ENCODE measurements at regions of chr12 and their contacts with region 1.

Region 1: DNA sequence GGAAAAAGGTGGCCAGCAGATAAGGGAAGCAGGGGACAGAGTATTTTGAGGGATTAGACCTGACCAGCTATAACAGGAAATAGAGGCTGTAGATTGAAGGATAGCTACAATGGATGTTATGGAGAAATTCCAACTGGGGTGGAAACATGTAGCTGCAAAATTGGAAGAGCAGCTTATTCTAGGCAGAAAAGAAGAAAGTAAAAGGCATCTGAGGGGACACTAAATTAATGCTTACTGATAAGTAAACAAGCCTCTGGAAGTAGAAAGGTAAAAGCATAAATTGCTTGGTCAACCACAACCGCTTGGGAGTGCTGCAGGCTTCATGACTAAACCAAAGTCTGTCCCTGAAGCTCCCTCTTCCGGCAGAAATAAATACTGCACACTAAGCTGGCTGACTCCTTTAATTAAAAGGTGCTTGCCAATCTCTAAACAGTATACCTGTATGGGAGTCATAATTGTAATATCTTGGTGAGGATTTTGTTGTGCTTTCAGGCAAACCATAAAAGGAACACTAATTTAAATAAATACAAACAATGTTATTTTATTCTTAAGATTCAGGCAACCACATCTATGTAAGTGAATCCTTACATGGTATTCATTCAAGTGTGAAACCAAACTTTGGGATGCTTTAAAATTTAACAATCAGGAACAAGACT is 7.7 kb downstream of the UBC start:
- DNase-seq: peak; percentile 93
- ATAC-seq: peak; percentile 93
- H3K4me3 ChIP-seq: no peak overlapping the region
- H3K4me3 Mint-ChIP-seq: no peak overlapping the region
- H3K27ac ChIP-seq: no peak overlapping the region
- H3K27ac Mint-ChIP-seq: peak overlapping the region; percentile 54
- H3K4me1 ChIP-seq: peaks cover 22 to 33% of the 10 kb centered on the region in 2 donors
- H3K4me1 Mint-ChIP-seq: peaks cover 39% of the 10 kb centered on the region
- H3K27me3 ChIP-seq: no peaks in the 10 kb centered on the region
- H3K27me3 Mint-ChIP-seq: no peaks in the 10 kb centered on the region
- CTCF ChIP-seq: peak; percentile 100

Region 2: GRCh38 chr12:124767066-124767821 is 139.5 kb before region 1 on chr12:
- CTCF ChIA-PET with region 1: interaction called, 6 read pairs
- POLR2A ChIA-PET with region 1: no interaction called
- intact Hi-C with region 1: loop called (anchors 5 kb)
- DNase-seq: peak; percentile 80
- ATAC-seq: peak; percentile 90
- H3K4me3 ChIP-seq: no peak overlapping the region
- H3K4me3 Mint-ChIP-seq: no peak overlapping the region
- H3K27ac ChIP-seq: no peak overlapping the region
- H3K27ac Mint-ChIP-seq: peak overlapping the region; percentile 1
- H3K4me1 ChIP-seq: peaks cover 11 to 14% of the 10 kb centered on the region in 2 donors
- H3K4me1 Mint-ChIP-seq: peaks cover 10% of the 10 kb centered on the region
- H3K27me3 ChIP-seq: peaks cover 0 to 9% (median 4%) of the 10 kb centered on the region in 4 experiments
- H3K27me3 Mint-ChIP-seq: peaks cover 12% of the 10 kb centered on the region
- CTCF ChIP-seq: peak; percentile 98

Region 3: GRCh38 chr12:124884587-124885438 is 21.9 kb before region 1 on chr12:
- CTCF ChIA-PET with region 1: interaction called, 28 read pairs
- POLR2A ChIA-PET with region 1: no interaction called
- intact Hi-C with region 1: no loop called
- DNase-seq: peak; percentile 88
- ATAC-seq: peak; percentile 96
- H3K4me3 ChIP-seq: peak overlapping the region in 4 of 5 experiments; percentile 11 to 38 (median 28)
- H3K4me3 Mint-ChIP-seq: peak overlapping the region; percentile 83
- H3K27ac ChIP-seq: peak overlapping the region; percentile 59 to 67
- H3K27ac Mint-ChIP-seq: peak overlapping the region; percentile 95
- H3K4me1 ChIP-seq: peaks cover 55 to 70% of the 10 kb centered on the region in 2 donors
- H3K4me1 Mint-ChIP-seq: peaks cover 64% of the 10 kb centered on the region
- H3K27me3 ChIP-seq: peaks cover 0 to 3% (median 0%) of the 10 kb centered on the region in 4 experiments
- H3K27me3 Mint-ChIP-seq: no peaks in the 10 kb centered on the region
- CTCF ChIP-seq: no peak

Region 4: DNA sequence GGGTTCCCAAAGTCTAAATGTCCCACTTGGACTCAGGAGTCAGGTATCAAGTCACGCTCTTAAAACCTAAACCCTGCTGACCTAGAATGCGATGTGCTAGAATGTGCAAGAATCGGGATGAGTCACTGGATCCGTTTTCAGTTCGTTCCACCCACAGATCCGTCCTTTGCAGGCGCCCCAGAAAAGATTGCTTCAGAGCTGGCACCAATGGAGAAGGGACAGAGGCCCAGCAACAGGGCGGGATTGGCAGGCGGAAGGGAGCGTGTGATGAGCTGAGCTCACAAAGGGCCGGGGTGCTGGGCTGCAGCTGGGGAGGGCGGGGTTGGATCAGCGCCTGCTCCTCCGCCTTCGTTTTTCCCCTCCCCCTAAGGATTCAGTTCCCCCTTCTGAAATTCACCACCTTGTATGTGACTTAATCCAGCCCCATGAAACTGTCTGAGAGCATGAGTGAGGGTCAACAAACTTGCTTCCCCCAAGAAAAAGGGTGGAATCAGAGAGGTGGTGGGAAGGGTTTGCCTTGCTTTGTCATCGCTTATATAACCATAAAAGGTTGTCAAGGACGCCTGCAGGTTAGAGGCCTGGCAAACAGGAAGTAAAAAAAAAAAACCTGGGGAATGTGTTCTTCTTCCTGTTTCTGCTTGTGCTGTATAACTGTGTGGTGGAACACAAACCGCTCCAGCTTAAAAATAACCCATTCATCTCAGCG is 10.6 kb after region 1 on chr12:
- CTCF ChIA-PET with region 1: interaction called, 101 read pairs
- POLR2A ChIA-PET with region 1: interaction called, 7 read pairs
- intact Hi-C with region 1: loop called (anchors 2 kb)
- DNase-seq: peak; percentile 97
- ATAC-seq: peak; percentile 59
- H3K4me3 ChIP-seq: peak overlapping the region; percentile 36 to 73 (median 51)
- H3K4me3 Mint-ChIP-seq: peak overlapping the region; percentile 88
- H3K27ac ChIP-seq: peak overlapping the region; percentile 93 to 95
- H3K27ac Mint-ChIP-seq: peak overlapping the region; percentile 97
- H3K4me1 ChIP-seq: peaks cover 74 to 80% of the 10 kb centered on the region in 2 donors
- H3K4me1 Mint-ChIP-seq: peaks cover 88% of the 10 kb centered on the region
- H3K27me3 ChIP-seq: no peaks in the 10 kb centered on the region
- H3K27me3 Mint-ChIP-seq: no peaks in the 10 kb centered on the region
- CTCF ChIP-seq: no peak

Region 5: GRCh38 chr12:124927201-124928094 is 20.7 kb after region 1 on chr12:
- CTCF ChIA-PET with region 1: interaction called, 101 read pairs
- POLR2A ChIA-PET with region 1: interaction called, 4 read pairs
- intact Hi-C with region 1: no loop called
- DNase-seq: peak; percentile 94
- ATAC-seq: peak; percentile 88
- H3K4me3 ChIP-seq: peak overlapping the region; percentile 69 to 91 (median 77)
- H3K4me3 Mint-ChIP-seq: peak overlapping the region; percentile 93
- H3K27ac ChIP-seq: peak overlapping the region; percentile 43 to 50
- H3K27ac Mint-ChIP-seq: peak overlapping the region; percentile 99
- H3K4me1 ChIP-seq: peaks cover 16 to 24% of the 10 kb centered on the region in 2 donors
- H3K4me1 Mint-ChIP-seq: peaks cover 29% of the 10 kb centered on the region
- H3K27me3 ChIP-seq: no peaks in the 10 kb centered on the region
- H3K27me3 Mint-ChIP-seq: no peaks in the 10 kb centered on the region
- CTCF ChIP-seq: no peak

Region 6: DNA sequence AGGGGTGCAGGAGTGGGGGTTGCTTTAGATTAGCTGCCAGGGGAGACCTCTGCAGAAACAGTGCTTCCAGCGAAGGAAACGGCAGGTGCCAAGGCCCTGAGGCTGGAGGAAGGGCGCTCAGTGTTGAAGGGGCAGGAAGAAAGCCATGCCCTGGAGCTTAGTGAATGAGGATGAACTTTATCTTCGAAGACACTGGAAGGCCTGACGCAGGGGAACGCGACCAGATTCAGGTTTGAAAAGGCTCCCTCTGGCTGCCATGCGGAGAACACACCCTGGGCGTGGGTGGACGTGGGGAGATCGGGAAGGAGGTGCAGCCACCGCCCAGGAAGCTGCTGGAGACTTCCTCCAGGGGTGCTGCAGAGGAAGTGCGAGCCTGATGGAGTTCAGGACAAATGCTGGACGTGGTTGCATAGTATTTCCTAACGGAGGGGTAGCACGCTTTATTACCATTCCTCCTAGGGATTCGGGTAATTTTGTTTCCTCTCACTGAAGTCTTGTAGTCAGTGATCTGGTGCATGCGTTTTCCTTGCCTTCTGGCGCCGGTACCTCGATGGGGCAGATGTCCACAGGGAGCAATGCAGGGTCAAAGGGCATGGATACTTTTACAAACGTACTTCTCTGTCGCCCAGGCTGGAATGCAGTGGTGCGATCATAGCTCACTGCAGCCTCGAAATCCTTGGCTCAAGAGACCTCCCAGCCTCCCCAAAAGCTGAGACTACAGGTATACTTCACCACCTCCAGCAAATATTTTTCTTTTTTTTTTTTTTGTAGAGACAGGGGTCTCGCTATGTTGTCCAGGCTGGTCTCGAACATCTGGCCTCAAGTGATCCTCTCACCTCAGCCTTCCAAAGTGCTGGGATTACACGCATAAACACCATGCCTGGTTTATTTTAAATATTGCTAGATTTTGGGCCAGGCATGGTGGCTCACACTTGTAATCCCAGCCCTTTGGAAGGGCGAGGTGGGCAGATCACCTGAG is 34.1 kb after region 1 on chr12:
- CTCF ChIA-PET with region 1: interaction called, 384 read pairs
- POLR2A ChIA-PET with region 1: interaction called, 29 read pairs
- intact Hi-C with region 1: loop called (anchors 1 kb)
- DNase-seq: peak; percentile 88
- ATAC-seq: peak; percentile 57
- H3K4me3 ChIP-seq: peak overlapping the region in 4 of 5 experiments; percentile 58 to 80 (median 75)
- H3K4me3 Mint-ChIP-seq: no peak overlapping the region
- H3K27ac ChIP-seq: peak overlapping the region; percentile 44 to 61
- H3K27ac Mint-ChIP-seq: no peak overlapping the region
- H3K4me1 ChIP-seq: peaks cover 27 to 29% of the 10 kb centered on the region in 2 donors
- H3K4me1 Mint-ChIP-seq: peaks cover 14% of the 10 kb centered on the region
- H3K27me3 ChIP-seq: no peaks in the 10 kb centered on the region
- H3K27me3 Mint-ChIP-seq: no peaks in the 10 kb centered on the region
- CTCF ChIP-seq: peak; percentile 87

Region 7: DNA sequence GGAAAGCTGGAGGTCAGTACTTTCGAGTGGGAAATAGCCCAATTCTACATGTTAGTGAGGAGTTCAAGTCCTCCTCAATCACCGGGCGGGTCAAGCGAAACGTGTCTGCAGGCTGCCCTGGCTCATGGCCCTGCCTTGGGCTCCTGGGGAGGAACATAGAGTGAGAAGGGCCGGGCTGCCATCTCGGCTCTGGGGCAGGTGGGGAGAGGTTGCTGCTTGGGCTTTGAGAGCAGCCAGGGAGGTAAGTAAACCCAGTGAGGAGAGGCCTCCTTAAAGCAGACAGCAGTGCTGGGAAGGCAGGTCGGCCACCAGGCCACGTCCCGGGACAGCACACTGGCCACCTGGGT is 39.7 kb after region 1 on chr12:
- CTCF ChIA-PET with region 1: interaction called, 384 read pairs
- POLR2A ChIA-PET with region 1: interaction called, 3 read pairs
- intact Hi-C with region 1: no loop called
- DNase-seq: no peak
- ATAC-seq: no peak
- H3K4me3 ChIP-seq: no peak overlapping the region
- H3K4me3 Mint-ChIP-seq: no peak overlapping the region
- H3K27ac ChIP-seq: no peak overlapping the region
- H3K27ac Mint-ChIP-seq: no peak overlapping the region
- H3K4me1 ChIP-seq: no peaks in the 10 kb centered on the region
- H3K4me1 Mint-ChIP-seq: no peaks in the 10 kb centered on the region
- H3K27me3 ChIP-seq: no peaks in the 10 kb centered on the region
- H3K27me3 Mint-ChIP-seq: no peaks in the 10 kb centered on the region
- CTCF ChIP-seq: no peak

Region 8: GRCh38 chr12:125110641-125111360 is 204.1 kb after region 1 on chr12:
- CTCF ChIA-PET with region 1: no interaction called
- POLR2A ChIA-PET with region 1: no interaction called
- intact Hi-C with region 1: no loop called
- DNase-seq: no peak
- ATAC-seq: no peak
- H3K4me3 ChIP-seq: no peak overlapping the region
- H3K4me3 Mint-ChIP-seq: no peak overlapping the region
- H3K27ac ChIP-seq: no peak overlapping the region
- H3K27ac Mint-ChIP-seq: no peak overlapping the region
- H3K4me1 ChIP-seq: no peaks in the 10 kb centered on the region
- H3K4me1 Mint-ChIP-seq: no peaks in the 10 kb centered on the region
- H3K27me3 ChIP-seq: no peaks in the 10 kb centered on the region
- H3K27me3 Mint-ChIP-seq: no peaks in the 10 kb centered on the region
- CTCF ChIP-seq: no peak